ENCODE measurements at regions of chr3 and their contacts with region 1.

Region 1: GRCh38 chr3:157174649-157175498 is 14.9 kb upstream of the CCNL1 start:
- DNase-seq: peak; percentile 94 to 99
- H3K4me3 ChIP-seq: peak overlapping the region; percentile 75 to 76
- H3K27ac ChIP-seq: peak overlapping the region; percentile 96 to 98
- H3K4me1 ChIP-seq: peaks cover 0 to 17% of the 10 kb centered on the region in 2 donors
- H3K27me3 ChIP-seq: no peaks in the 10 kb centered on the region
- CTCF ChIP-seq: no peak

Region 2: GRCh38 chr3:156899951-156900350 is 274.9 kb before region 1 on chr3:
- intact Hi-C with region 1: no loop called
- DNase-seq: no peak
- H3K4me3 ChIP-seq: no peak overlapping the region
- H3K27ac ChIP-seq: no peak overlapping the region
- H3K4me1 ChIP-seq: no peaks in the 10 kb centered on the region
- H3K27me3 ChIP-seq: no peaks in the 10 kb centered on the region
- CTCF ChIP-seq: no peak

Region 3: DNA sequence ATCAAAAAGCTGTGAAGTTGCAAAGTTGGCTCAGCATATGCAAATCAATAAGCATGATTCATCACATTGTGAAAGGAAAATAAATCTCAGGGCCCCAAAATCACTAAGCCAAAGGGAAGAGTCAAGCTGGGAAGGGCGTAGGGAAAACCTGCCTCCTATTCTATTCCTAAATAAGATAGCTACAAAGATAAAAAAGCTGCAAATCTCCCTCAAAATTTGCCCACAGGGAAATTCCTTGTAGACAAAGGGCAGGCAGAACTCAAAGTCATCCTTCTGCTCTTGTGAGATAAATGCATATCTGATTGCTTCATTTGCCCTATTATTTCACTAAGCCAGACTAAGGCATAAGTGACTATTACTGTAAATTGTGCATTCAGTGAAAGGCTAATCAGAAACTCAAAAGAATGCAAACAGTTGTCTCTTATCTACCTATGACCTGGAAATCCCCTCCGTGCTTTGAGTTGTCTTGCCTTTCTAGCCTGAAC is 15.6 kb after region 1 on chr3:
- intact Hi-C with region 1: no loop called
- DNase-seq: no peak
- H3K4me3 ChIP-seq: no peak overlapping the region
- H3K27ac ChIP-seq: no peak overlapping the region
- H3K4me1 ChIP-seq: no peaks in the 10 kb centered on the region
- H3K27me3 ChIP-seq: no peaks in the 10 kb centered on the region
- CTCF ChIP-seq: no peak

Region 4: GRCh38 chr3:158713094-158713499 is 1538.2 kb after region 1 on chr3:
- intact Hi-C with region 1: loop called (anchors 10 kb)
- DNase-seq: peak in 1 of 2 donors; percentile 80
- H3K4me3 ChIP-seq: no peak overlapping the region
- H3K27ac ChIP-seq: peak overlapping the region; percentile 53 to 64
- H3K4me1 ChIP-seq: peaks cover 5 to 20% of the 10 kb centered on the region in 2 donors
- H3K27me3 ChIP-seq: no peaks in the 10 kb centered on the region
- CTCF ChIP-seq: no peak

Region 5: DNA sequence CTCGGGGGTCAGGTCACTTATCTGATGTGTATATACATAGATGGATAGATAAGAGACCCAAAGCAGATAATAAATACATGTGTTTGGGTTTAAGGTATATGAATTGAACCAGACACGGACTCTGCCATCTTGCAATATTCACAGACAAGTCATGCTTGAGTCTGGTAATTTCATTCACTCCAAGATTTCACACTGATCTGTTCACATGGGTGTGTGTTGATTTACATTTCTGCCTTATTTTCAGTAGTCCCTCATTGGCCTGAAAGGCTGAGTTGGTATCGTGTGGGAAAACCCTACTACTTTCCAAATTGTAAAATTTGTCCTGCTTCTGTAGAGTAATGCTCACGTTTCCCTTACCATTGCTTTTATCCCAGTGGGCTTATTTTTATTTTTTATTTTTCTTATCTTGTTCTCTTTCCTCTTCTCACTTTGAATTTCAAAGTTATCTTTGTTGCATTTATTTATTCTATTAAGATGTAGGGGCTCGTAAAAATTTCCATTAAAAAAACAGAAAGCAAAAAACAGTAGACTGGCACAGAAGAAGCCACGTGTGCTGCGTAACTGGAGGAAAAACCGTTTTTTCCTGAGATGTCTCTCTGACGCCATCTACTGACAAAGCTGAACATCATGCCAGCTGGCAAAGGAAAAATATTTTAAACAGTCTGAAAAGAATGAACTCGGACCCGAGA is 1616.2 kb after region 1 on chr3:
- intact Hi-C with region 1: loop called (anchors 10 kb)
- DNase-seq: no peak
- H3K4me3 ChIP-seq: peak overlapping the region; percentile 15 to 42
- H3K27ac ChIP-seq: no peak overlapping the region
- H3K4me1 ChIP-seq: no peaks in the 10 kb centered on the region
- H3K27me3 ChIP-seq: no peaks in the 10 kb centered on the region
- CTCF ChIP-seq: peak; percentile 67 to 87 (median 78)

Measured in ascending aorta (tissue), 2 donors.